ENCODE measurements at regions of chr6 and their contacts with region 1.

Region 1: DNA sequence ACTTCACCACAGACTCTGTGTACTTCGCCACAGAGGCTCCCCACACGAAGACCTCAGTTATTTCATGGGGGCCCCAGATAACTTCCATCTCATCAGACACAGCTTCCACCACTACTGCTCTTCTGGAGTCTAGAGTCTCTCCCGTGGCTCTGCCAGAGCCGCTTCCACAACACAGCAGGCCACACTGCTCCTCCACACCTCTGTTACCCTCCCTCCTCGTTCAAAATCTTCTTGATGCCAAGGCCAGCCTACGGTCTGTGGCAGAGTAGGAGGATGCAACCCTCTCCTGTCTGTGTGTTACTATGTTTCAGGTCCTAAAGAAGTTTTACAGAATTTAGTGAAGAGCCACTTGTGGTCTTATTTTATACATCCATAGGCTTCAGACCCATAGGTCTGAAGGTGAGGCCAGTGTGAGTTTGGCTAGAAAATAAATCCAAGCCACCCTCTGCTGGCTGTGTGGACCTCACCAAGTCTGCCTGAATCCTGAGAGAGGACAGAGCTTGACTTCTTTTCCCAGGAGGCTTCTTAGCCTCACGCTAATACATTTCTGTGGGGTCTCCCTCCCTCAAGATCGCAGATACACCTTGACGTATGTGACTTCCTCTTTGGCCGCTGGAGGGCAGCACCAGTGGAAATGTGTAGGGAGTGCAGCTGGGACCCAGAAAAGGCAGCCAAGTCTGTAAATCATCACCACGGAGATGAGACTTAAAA is 197.7 kb downstream of the FAXC start:
- DNase-seq: peak; percentile 11 to 34
- ATAC-seq: peak in 1 of 8 donors; percentile 27
- H3K4me3 ChIP-seq: no peak overlapping the region
- H3K27ac ChIP-seq: no peak overlapping the region
- H3K4me1 ChIP-seq: peaks cover 0 to 5% (median 0%) of the 10 kb centered on the region in 9 donors
- H3K27me3 ChIP-seq: peaks cover 0 to 8% (median 0%) of the 10 kb centered on the region in 7 donors
- CTCF ChIP-seq: peak in 8 of 9 donors; percentile 24 to 59 (median 53)

Region 2: DNA sequence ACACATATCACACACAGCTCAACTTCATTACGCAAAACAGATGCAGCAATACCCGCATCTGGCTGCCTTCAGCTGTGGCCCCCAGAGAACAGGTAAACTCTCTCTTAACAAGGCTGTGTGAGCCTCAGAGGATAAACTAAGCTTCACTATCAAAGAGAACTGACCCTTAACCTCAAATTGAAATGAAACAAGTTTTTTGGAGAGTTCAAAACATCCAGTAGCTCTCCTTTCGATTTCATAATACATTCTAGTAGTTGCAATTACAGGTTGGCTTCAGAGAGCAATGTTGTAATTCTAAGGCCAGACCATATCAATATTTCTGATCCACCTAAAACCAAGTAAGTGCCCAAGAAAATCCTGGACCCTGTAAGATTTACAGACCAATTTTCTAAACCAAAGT is 84.2 kb after region 1 on chr6:
- intact Hi-C with region 1: loop called in 7 of 10 experiments (anchors 5 to 10 kb)
- DNase-seq: no peak
- ATAC-seq: no peak
- H3K4me3 ChIP-seq: no peak overlapping the region
- H3K27ac ChIP-seq: no peak overlapping the region
- H3K4me1 ChIP-seq: no peaks in the 10 kb centered on the region
- H3K27me3 ChIP-seq: peaks cover 0 to 42% (median 19%) of the 10 kb centered on the region in 7 donors
- CTCF ChIP-seq: no peak

Region 3: DNA sequence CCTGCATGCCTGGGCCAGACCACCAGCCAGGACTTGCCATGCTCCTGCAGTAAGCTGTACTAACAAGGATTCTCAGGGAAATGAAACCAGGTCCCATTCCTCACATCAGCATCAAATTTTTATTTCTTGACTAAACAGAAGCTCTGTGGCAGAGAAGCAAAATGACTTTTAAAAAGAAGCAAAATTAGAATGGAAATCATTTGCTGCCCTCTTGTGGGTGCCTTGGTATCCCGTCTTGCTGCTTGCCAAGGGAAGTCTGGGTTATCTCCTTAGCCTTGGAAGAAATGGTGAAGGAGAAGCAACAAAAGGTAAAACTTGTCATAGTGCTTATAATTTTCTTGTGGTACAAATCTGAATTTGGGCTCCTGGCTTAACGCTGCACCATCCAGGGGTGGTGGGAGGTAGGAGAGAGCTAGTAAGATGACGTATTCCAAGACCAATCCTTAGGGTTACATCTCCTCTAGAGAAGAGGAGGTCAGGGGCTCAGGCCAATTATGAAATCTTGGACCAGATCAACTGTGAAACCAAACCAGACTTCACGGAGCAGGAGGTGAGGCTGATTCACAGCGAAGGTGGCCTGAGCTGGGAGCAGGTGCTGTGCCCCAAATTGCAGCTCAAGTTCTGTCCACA is 90.2 kb after region 1 on chr6:
- intact Hi-C with region 1: loop called in 9 of 10 experiments (anchors 1 to 10 kb)
- DNase-seq: peak in 1 of 2 donors; percentile 16
- ATAC-seq: no peak
- H3K4me3 ChIP-seq: no peak overlapping the region
- H3K27ac ChIP-seq: no peak overlapping the region
- H3K4me1 ChIP-seq: no peaks in the 10 kb centered on the region
- H3K27me3 ChIP-seq: peaks cover 0 to 20% (median 0%) of the 10 kb centered on the region in 7 donors
- CTCF ChIP-seq: peak; percentile 7 to 59 (median 41)